ENCODE measurements at regions of chr6 and their contacts with region 1.

Region 1: DNA sequence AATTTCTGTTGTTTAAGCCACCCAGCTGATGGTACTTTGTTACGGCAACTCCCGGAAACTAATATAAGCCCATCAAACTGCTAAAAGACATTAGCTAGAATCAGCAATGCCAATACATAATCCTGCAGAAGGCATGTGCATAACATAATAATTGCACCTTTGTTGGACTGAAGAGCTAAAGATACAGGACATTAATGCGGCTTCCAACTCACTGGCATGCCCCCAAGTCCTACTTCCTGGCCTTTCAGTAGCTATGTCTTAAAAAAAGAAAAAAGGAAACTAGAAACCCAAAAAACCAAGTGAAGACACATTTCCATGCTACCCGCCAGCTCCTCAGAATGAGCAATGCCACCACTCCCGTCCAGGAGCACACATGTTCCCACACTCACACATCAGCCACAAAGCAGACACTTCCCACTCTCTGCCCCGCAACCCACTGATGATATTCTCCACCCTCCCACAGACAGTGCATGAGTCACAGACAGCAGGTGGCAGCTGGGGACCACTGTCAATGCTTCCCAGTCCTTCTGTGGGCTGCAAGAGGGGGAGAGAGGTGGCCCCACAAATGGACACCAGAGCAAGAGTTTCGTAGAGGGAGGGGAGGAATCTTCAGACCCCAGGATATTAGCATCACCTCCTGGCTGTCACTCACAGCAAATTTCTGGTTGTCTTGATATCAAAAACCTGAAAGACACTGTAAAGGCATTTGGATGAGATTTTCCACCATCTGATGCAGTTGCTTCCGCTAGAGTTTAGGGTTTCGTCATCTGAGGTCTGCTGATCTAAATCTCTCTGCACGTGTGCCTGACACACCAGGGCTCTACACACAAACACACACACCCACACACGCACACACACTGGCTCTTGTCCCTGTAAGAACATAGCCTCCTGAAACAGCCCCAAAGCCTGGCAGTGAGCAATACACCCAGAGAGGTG is 32.8 kb downstream of the GFOD1 start:
- DNase-seq: peak; percentile 52 to 89 (median 59)
- H3K4me3 ChIP-seq: peak overlapping the region; percentile 17 to 45
- H3K4me3 Mint-ChIP-seq: peak overlapping the region; percentile 61 to 81 (median 76)
- H3K27ac ChIP-seq: peak overlapping the region; percentile 8
- H3K27ac Mint-ChIP-seq: peak overlapping the region; percentile 81 to 94 (median 86)
- H3K4me1 ChIP-seq: peaks cover 22% of the 10 kb centered on the region
- H3K4me1 Mint-ChIP-seq: peaks cover 12 to 23% (median 22%) of the 10 kb centered on the region in 4 donors
- H3K27me3 ChIP-seq: no peaks in the 10 kb centered on the region
- H3K27me3 Mint-ChIP-seq: no peaks in the 10 kb centered on the region

Region 2: DNA sequence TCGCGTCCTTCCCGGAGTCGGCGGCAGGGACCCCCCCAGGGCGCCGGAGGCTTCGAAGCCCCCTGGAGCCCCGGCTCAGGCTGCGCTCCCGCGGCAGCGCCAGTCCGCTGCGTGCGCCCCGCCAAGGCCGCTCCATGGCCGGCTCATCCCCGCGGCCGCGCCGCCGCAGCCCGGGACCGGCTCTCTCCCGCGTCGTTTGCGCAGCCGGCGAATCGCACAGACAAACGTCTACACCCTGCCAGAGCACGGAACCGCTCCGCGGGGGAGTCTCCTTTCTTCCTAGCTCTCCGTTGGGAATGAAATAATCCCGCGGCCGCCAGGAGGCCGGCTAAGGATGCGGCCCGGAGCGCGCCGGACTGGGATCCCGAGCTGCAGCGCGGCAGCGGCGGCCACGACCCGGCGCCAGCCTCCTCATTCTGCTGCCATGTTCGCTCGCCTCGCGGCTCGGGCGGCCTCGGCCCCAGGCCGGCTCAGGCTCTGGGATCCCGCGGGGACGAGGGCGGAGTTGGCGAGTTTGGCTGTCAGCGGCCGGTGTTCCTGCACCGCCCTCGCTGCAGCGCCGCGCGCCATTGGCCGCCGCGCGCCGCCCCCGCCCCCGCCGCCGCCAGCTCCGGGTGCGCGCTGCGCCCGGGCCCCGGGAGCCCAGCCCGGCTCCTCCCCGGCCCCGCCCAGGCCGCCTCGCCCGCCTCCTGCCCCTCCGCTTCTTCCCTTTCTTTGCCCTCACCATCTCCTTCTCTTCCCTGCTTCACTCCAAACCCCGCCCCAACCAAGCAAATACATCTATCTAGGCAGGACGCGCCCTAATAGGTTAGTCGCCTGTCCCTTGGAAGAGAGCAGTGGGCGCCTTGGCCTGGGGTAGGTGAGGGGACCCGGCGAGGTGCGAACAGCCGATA is 32.8 kb after region 1 on chr6 and contains the start of gene GFOD1:
- CTCF ChIA-PET with region 1: interaction called, 3 read pairs
- POLR2A ChIA-PET with region 1: interaction called, 4 read pairs
- intact Hi-C with region 1: loop called (anchors 5 kb)
- DNase-seq: peak; percentile 55 to 68 (median 61)
- H3K4me3 ChIP-seq: peak within 1 kb of the TSS; percentile 67 to 69
- H3K4me3 Mint-ChIP-seq: peak within 1 kb of the TSS; percentile 88 to 94 (median 92)
- H3K27ac ChIP-seq: peak within 1 kb of the TSS; percentile 4
- H3K27ac Mint-ChIP-seq: peak within 1 kb of the TSS; percentile 42 to 78 (median 73)
- H3K4me1 ChIP-seq: peaks cover 12% of the 10 kb centered on the region
- H3K4me1 Mint-ChIP-seq: peaks cover 16 to 36% (median 30%) of the 10 kb centered on the region in 4 donors
- H3K27me3 ChIP-seq: no peaks in the 10 kb centered on the region
- H3K27me3 Mint-ChIP-seq: peaks cover 5 to 6% of the 10 kb centered on the region in 2 donors
- total RNA-seq, gene GFOD1: 0.97 to 1.1 TPM

Region 3: DNA sequence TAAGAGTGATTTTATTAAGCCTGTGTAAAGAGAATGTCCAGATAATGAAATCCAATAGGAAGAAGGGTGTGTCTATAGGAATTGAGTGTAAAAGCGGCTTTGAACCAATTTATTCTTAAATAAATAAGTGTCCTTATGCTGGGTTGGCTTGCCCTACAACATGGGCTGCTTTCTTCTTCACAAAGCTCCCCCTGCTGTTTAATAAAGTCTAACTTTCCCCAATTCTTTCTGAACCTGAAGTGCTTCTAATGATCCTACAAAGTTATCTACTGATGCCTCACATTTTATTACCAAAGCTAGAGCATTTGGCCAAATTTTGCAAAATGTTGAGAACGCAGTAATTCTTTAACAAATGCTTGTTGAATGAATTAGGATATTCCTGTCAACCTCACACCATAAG is 83.5 kb after region 1 on chr6:
- CTCF ChIA-PET with region 1: interaction called, 24 read pairs
- POLR2A ChIA-PET with region 1: no interaction called
- intact Hi-C with region 1: loop called (anchors 1 kb)
- DNase-seq: peak in 3 of 5 donors; percentile 10 to 23 (median 17)
- H3K4me3 ChIP-seq: no peak overlapping the region
- H3K4me3 Mint-ChIP-seq: no peak overlapping the region
- H3K27ac ChIP-seq: no peak overlapping the region
- H3K27ac Mint-ChIP-seq: no peak overlapping the region
- H3K4me1 ChIP-seq: no peaks in the 10 kb centered on the region
- H3K4me1 Mint-ChIP-seq: no peaks in the 10 kb centered on the region
- H3K27me3 ChIP-seq: no peaks in the 10 kb centered on the region
- H3K27me3 Mint-ChIP-seq: no peaks in the 10 kb centered on the region

Region 4: DNA sequence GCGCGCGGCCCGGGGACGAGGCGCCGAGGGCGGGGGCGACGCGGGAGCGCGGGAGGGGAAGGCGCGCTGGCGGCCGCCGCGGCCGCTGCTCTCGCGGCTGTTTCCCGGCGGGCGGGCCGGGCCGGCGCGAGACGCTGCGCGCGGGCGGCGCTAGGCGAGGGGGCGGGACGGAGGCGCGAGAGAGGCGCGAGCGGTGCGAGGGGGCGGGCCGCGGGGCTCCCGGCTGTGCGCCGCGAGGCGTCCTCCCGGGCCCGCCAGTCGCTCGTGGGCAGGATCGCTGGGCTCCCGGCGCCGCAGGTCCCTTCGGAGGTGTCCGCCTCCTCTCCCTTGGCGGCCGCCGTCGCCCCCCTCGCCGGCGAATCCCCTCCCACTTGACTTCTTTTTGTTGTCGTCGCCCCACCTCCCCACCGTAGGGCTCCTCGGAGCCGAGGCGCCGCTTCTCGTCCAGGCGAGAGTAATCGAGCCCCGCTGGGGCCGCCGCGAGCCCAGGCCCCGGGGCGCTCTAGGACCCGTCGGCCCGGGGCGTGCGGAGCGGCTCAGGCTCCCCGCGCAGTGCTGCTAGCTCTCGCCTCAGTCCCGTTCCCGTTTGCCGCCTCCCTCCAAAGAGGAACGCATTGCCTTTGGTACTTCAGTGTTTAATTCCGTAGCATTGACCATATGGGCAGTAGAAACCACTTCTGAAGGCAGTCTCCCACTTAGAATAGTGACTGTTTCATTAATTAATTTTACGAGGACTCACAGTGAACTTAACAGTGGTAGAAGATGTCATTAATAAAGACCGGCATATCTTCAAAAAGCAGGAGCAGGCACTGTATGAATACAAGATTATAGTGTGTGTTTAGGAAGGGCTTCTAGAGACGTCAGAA is 257.4 kb after region 1 on chr6 and contains the start of gene RANBP9:
- CTCF ChIA-PET with region 1: no interaction called
- POLR2A ChIA-PET with region 1: no interaction called
- intact Hi-C with region 1: no loop called
- DNase-seq: peak; percentile 89 to 92 (median 91)
- H3K4me3 ChIP-seq: peak within 1 kb of the TSS; percentile 69 to 74
- H3K4me3 Mint-ChIP-seq: peak within 1 kb of the TSS; percentile 95 to 99 (median 96)
- H3K27ac ChIP-seq: peak within 1 kb of the TSS; percentile 87
- H3K27ac Mint-ChIP-seq: peak within 1 kb of the TSS; percentile 98 to 99 (median 99)
- H3K4me1 ChIP-seq: peaks cover 50% of the 10 kb centered on the region
- H3K4me1 Mint-ChIP-seq: peaks cover 28 to 73% (median 44%) of the 10 kb centered on the region in 4 donors
- H3K27me3 ChIP-seq: no peaks in the 10 kb centered on the region
- H3K27me3 Mint-ChIP-seq: no peaks in the 10 kb centered on the region
- total RNA-seq, gene RANBP9: 51.1 to 52.9 TPM

Region 5: GRCh38 chr6:13767121-13767808 is 312.7 kb after region 1 on chr6:
- CTCF ChIA-PET with region 1: no interaction called
- POLR2A ChIA-PET with region 1: no interaction called
- intact Hi-C with region 1: loop called (anchors 10 kb)
- DNase-seq: peak in 4 of 5 donors; percentile 11 to 25 (median 22)
- H3K4me3 ChIP-seq: peak overlapping the region in 1 of 2 donors; percentile 32
- H3K4me3 Mint-ChIP-seq: peak overlapping the region in 7 of 8 donors; percentile 65 to 80 (median 74)
- H3K27ac ChIP-seq: no peak overlapping the region
- H3K27ac Mint-ChIP-seq: peak overlapping the region in 5 of 7 donors; percentile 43 to 89 (median 61)
- H3K4me1 ChIP-seq: peaks cover 19% of the 10 kb centered on the region
- H3K4me1 Mint-ChIP-seq: peaks cover 23 to 44% (median 31%) of the 10 kb centered on the region in 4 donors
- H3K27me3 ChIP-seq: no peaks in the 10 kb centered on the region
- H3K27me3 Mint-ChIP-seq: no peaks in the 10 kb centered on the region